ENCODE measurements at regions of chr12 and their contacts with region 1.

Region 1: DNA sequence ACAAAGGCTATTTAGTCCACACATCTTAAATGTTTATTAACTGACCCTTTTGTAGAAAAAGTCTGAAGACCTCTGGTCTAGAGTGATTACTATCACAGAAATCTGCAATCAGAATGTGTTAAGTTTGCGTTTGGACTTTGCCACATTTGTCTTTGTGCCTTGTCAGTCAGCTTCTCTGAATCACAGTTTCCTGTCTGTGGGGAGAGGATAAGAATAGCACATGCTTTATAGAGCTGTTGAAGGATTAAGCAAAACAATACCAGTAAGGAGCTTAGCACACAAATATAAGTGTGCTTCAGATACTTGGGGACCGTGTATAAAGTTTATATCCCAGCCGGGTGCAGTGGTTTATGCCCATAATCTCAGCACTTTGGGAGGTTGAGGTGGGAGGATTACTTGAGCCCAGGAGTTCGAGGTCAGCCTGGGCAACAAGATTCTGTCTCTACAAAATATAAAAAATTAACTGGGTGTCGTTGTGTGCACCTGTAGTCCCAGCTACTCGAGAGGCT is 63.0 kb upstream of the BTG1 start:
- DNase-seq: peak; percentile 71
- ATAC-seq: peak; percentile 86
- H3K4me3 ChIP-seq: peak overlapping the region; percentile 32; the same call in 1 of the 2 replicates
- H3K27ac ChIP-seq: peak overlapping the region; percentile 75
- H3K4me1 ChIP-seq: peaks cover 13% of the 10 kb centered on the region
- H3K27me3 ChIP-seq: no peaks in the 10 kb centered on the region
- CTCF ChIP-seq: no peak
- EP300 ChIP-seq: peak in 1 of 2 experiments; percentile 21; a peak in 1 of 4 replicates
- POLR2A ChIP-seq: no peak
- RAD21 ChIP-seq: no peak

Region 2: DNA sequence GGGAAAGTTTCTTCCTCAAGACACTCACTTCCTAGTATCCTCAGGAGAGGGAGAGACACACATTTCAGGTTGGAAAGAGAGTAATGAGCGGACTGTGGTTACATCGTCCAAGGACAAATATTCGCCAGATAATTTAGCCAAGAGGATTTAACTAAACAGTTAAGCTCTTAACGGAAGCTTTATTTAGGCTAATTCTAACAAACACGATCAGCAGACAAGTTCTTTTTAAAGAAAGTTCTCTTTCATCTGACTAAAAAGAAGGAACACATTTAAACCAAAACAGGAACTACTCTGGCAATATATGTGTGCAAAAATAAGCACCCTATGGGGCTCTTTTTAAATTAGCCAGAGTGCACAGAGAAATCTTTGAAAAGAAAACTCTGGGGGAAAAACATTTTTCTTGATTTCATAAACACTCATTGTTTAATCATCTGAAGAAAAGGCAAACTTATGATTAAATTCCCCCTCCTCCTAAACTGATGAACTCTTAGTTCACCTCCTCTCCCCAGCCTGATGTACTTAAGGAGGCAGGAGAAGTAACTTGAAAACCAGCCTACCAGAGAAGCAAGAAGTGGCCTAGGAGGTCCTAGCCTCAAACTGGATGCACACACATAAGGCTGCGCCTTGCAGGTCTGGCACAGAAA is 49.7 kb before region 1 on chr12:
- CTCF ChIA-PET with region 1: no interaction called
- POLR2A ChIA-PET with region 1: interaction called, 5 read pairs
- RAD21 ChIA-PET with region 1: interaction called, 13 read pairs
- SMC1A ChIA-PET with region 1: interaction called, 4 read pairs
- in situ Hi-C with region 1: no loop called
- intact Hi-C with region 1: loop called (anchors 5 kb)
- DNase-seq: no peak
- ATAC-seq: peak; percentile 73
- H3K4me3 ChIP-seq: peak overlapping the region; percentile 59
- H3K27ac ChIP-seq: peak overlapping the region; percentile 87
- H3K4me1 ChIP-seq: peaks cover 21% of the 10 kb centered on the region
- H3K27me3 ChIP-seq: no peaks in the 10 kb centered on the region
- CTCF ChIP-seq: no peak
- EP300 ChIP-seq: peak in 1 of 2 experiments; percentile 40; a peak in 1 of 4 replicates
- POLR2A ChIP-seq: no peak
- RAD21 ChIP-seq: no peak

Region 3: GRCh38 chr12:92226071-92226661 is 17.5 kb after region 1 on chr12:
- CTCF ChIA-PET with region 1: no interaction called
- POLR2A ChIA-PET with region 1: no interaction called
- RAD21 ChIA-PET with region 1: no interaction called
- SMC1A ChIA-PET with region 1: interaction called, 12 read pairs
- in situ Hi-C with region 1: no loop called
- intact Hi-C with region 1: no loop called
- DNase-seq: no peak
- ATAC-seq: no peak
- H3K4me3 ChIP-seq: no peak overlapping the region
- H3K27ac ChIP-seq: no peak overlapping the region
- H3K4me1 ChIP-seq: no peaks in the 10 kb centered on the region
- H3K27me3 ChIP-seq: no peaks in the 10 kb centered on the region
- CTCF ChIP-seq: no peak
- EP300 ChIP-seq: no peak
- POLR2A ChIP-seq: no peak
- RAD21 ChIP-seq: no peak

Region 4: DNA sequence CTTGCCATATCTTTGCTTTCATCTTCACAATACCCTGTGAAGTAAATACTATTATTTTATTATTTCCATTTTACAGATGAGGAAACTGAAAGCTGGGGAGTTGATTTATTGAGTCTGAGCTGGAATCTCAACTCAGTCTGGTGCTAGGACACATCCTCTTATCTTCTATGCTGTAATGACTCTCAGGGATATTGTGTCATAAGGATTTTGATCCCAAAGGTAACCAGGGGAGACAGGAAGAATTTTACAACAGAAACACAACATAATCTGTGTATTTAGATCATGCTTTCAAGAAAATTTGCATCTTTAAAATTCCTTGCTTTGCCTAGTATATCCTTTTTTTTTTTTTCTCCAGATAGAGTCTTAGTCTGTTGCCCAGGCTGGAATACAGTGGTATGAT is 60.3 kb after region 1 on chr12:
- CTCF ChIA-PET with region 1: no interaction called
- POLR2A ChIA-PET with region 1: no interaction called
- RAD21 ChIA-PET with region 1: no interaction called
- SMC1A ChIA-PET with region 1: no interaction called
- in situ Hi-C with region 1: no loop called
- intact Hi-C with region 1: no loop called
- DNase-seq: no peak
- ATAC-seq: no peak
- H3K4me3 ChIP-seq: no peak overlapping the region
- H3K27ac ChIP-seq: no peak overlapping the region
- H3K4me1 ChIP-seq: no peaks in the 10 kb centered on the region
- H3K27me3 ChIP-seq: no peaks in the 10 kb centered on the region
- CTCF ChIP-seq: no peak
- EP300 ChIP-seq: no peak
- POLR2A ChIP-seq: no peak
- RAD21 ChIP-seq: no peak

Region 5: DNA sequence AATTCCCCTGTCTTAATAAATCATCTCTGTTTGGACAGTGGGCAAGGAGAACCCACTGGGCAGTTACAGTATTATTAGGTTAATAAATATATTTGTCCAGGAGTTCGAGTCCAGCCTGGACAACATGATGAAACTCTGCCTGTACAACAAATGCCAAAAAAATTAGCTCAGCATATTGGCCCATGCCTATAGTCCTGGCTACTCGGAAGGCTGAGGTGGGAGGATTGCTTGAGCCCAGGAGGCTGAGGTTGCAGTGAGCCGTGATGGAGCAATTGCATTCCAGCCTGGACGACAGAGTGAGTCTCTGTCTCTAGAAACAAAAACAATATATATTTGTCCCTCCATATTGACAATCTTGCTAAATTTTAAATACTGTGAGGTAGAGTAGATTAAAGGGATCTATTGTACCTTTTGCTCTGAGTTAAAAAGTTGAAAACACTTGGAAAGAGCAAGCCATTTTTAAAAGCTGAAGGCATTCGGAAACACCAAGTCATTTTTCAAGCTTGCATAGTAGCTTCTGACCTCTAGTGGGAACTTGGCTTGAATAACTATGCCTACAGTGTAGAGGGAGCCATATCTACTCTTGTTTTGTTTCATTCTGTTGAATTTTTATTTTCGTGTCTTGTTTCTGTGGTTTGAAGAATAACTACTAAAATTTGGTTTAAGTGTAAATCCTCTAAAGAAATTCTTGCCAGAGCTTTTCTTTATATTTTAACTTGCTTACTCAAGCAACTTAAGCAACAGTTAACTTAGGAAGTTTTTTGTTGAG is 735.0 kb after region 1 on chr12:
- CTCF ChIA-PET with region 1: no interaction called
- POLR2A ChIA-PET with region 1: no interaction called
- RAD21 ChIA-PET with region 1: no interaction called
- SMC1A ChIA-PET with region 1: no interaction called
- in situ Hi-C with region 1: no loop called
- intact Hi-C with region 1: no loop called
- DNase-seq: no peak
- ATAC-seq: peak; percentile 75
- H3K4me3 ChIP-seq: no peak overlapping the region
- H3K27ac ChIP-seq: no peak overlapping the region
- H3K4me1 ChIP-seq: no peaks in the 10 kb centered on the region
- H3K27me3 ChIP-seq: no peaks in the 10 kb centered on the region
- CTCF ChIP-seq: 0 out of 6 replicates have a peak, but pooled peaks have one; percentile 0 to 18 (median 6)
- EP300 ChIP-seq: no peak
- POLR2A ChIP-seq: no peak
- RAD21 ChIP-seq: no peak

Measured in GM12878 (cell line).